ENCODE measurements at regions of chr16 and their contacts with region 1.

Region 1: GRCh38 chr16:72149676-72150464 is 22.1 kb downstream of the PMFBP1 start:
- DNase-seq: peak; percentile 38
- ATAC-seq: peak; percentile 98
- H3K4me3 Mint-ChIP-seq: no peak overlapping the region
- H3K27ac Mint-ChIP-seq: no peak overlapping the region
- H3K4me1 Mint-ChIP-seq: peaks cover 6% of the 10 kb centered on the region
- H3K27me3 Mint-ChIP-seq: peaks cover 8% of the 10 kb centered on the region; the same call in 1 of the 2 replicates
- CTCF ChIP-seq: no peak

Region 2: GRCh38 chr16:72124761-72125634 is 24.9 kb before region 1 on chr16:
- CTCF ChIA-PET with region 1: interaction called, 68 read pairs
- POLR2A ChIA-PET with region 1: interaction called, 8 read pairs
- DNase-seq: peak; percentile 80
- ATAC-seq: peak; percentile 90
- H3K4me3 Mint-ChIP-seq: no peak overlapping the region
- H3K27ac Mint-ChIP-seq: 0 out of 2 replicates have a peak overlapping the region, but pooled peaks have one; percentile 8
- H3K4me1 Mint-ChIP-seq: peaks cover 19% of the 10 kb centered on the region
- H3K27me3 Mint-ChIP-seq: no peaks in the 10 kb centered on the region; the same call in 1 of the 2 replicates
- CTCF ChIP-seq: peak; percentile 80

Region 3: GRCh38 chr16:72131036-72131435 is 18.8 kb before region 1 on chr16:
- CTCF ChIA-PET with region 1: interaction called, 68 read pairs
- POLR2A ChIA-PET with region 1: interaction called, 8 read pairs
- DNase-seq: no peak
- ATAC-seq: peak; percentile 30; the same call in 1 of the 2 replicates
- H3K4me3 Mint-ChIP-seq: no peak overlapping the region
- H3K27ac Mint-ChIP-seq: no peak overlapping the region
- H3K4me1 Mint-ChIP-seq: peaks cover 18% of the 10 kb centered on the region
- H3K27me3 Mint-ChIP-seq: no peaks in the 10 kb centered on the region; the same call in 1 of the 2 replicates
- CTCF ChIP-seq: no peak

Region 4: DNA sequence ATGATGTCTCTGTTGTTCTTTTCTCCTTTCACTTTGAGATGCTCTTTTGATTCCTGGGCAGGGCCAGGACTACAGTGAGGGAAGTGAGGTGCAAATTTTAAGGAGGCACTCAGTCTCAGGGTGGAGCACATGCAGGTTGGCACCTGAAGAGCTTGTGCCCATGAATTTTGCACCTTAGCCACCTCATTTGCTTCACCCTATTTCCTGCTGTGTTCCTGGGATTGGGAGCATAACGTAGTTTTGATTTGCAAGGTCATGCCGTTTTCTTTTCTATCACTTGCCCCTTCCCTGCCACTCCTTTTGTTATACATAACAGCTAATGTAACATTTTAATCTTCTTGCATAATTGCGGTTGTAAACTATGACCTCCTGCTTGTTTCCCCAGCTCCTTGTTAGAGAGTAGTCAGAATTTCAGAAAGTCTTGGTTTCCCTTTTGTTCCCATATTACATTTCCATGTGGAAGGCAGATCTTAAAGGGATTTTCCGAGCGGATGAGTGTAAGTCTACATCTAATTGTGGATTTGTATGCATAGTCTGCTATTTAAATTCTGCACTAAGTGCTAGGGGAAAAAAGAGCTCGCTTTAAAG is 12.3 kb after region 1 on chr16:
- CTCF ChIA-PET with region 1: interaction called, 16 read pairs
- POLR2A ChIA-PET with region 1: interaction called, 10 read pairs
- DNase-seq: no peak
- ATAC-seq: peak; percentile 52
- H3K4me3 Mint-ChIP-seq: no peak overlapping the region
- H3K27ac Mint-ChIP-seq: no peak overlapping the region
- H3K4me1 Mint-ChIP-seq: peaks cover 14% of the 10 kb centered on the region
- H3K27me3 Mint-ChIP-seq: peaks cover 25% of the 10 kb centered on the region
- CTCF ChIP-seq: no peak

Region 5: DNA sequence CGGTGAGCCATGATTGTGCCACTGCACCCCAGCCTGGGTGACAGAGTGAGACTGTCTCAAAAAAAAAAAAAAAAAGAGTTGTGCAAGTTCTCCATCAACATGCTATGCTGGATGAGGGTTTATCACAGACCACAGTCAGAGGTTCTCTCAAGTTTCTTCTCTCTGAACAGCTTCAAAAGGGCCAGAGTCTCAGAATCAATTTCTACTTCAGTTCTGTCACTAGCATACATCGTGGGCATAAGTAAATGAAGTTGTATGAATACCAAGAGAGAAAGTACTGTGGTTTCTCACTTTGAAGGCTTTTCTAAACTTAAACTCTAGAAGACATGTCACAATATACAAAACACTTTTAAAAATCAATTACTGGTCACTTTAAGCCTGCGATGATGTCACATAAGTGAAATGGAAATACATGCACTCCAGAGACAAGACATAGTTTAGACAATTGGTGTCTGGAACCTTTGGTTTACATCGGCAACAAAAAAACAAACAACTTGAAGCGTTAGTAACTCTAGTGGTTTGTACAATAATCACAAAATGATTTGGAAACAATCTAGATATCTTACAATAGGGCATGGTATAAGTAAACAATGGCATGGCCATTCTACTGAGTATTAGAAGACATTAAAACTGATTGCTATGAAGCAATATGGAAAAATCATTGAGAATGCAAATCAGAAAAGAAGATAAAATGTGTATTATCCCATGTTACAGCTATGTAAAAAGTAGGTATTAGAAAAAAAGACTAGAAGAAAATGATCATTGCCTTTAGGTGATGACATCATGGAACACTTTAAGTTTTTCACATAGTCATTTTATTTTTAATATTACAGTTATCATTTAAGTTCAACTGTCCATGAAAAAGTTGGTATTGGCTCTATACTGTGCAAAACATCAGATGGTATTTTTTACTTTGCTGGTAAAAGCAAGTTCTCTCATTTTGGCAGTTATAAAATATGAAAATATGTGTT is 665.8 kb after region 1 on chr16:
- CTCF ChIA-PET with region 1: no interaction called
- POLR2A ChIA-PET with region 1: no interaction called
- DNase-seq: no peak
- ATAC-seq: no peak
- H3K4me3 Mint-ChIP-seq: no peak overlapping the region
- H3K27ac Mint-ChIP-seq: no peak overlapping the region
- H3K4me1 Mint-ChIP-seq: no peaks in the 10 kb centered on the region
- H3K27me3 Mint-ChIP-seq: no peaks in the 10 kb centered on the region
- CTCF ChIP-seq: no peak